AG04449 (cell line): ENCODE measurements at regions of chr9 and their contacts with region 1.

Region 1: DNA sequence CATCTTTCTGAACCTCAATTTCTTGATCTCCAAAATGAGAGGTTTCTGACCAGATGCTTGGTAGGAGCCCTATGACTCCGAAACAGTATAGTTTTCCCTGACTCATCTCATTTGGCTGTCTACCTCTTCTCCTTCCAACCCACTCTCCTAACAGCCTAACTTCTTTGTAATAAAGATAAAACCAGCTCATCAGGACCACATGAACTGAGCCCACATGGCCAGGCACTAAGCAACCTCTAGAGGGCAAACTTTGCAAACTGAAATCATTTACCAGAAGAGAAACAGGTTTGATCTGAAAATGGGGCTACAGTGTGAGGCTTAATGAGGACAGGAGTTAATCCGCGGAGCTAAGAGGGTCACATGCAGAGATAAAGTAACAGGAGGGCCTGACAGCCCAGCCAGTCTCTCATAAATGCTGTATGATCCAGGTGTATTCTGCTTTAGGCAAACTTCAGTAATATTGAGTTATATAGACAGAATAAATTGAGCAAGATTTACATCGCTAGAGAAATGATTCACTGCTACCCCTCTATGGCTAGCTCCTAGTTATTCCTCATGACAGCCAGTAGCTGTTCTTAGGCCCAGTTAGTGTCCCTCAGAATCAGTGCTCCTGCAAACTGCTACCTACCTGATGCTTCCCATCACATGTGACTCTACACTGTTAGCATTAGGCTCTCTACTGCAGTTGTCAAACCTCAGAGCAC is 64.6 kb downstream of the ABCA1 start:
- DNase-seq: no peak
- H3K4me3 ChIP-seq: no peak overlapping the region
- CTCF ChIP-seq: peak; percentile 75

Region 2: GRCh38 chr9:104885818-104886709 is 22.7 kb after region 1 on chr9:
- CTCF ChIA-PET with region 1: interaction called, 11 read pairs
- POLR2A ChIA-PET with region 1: no interaction called
- DNase-seq: no peak
- H3K4me3 ChIP-seq: no peak overlapping the region
- CTCF ChIP-seq: no peak

Region 3: DNA sequence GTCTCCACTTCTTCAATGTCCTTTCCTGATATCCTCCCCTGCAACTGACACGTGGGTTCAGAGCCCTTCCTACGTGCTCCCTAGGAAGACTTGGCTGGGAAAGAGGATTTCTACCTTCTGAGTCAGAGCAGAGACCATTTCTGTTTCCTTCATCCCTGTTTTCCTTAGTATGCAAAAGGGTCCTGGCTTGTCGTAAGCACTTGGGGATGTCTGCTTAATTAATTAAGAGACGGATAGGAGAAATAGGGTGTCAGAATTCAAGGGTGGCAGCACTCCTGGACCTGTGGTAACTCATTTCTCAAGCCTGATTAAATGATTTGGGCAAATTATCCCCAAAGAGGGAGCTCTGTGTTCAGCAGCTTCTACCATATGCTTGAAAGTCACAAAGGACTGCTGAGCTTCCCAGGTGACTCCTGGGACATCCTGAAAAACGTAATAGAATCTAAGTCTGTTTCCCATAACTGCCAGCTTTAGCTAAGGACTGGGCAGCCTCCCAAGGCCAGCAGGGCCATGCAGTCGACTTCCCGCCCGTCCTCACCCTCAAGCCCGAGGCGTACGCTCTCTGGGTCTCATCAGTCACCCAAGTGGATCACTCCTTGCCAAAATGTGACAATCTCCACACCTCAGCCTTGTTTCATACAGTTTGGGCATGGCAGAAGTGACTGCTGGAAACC is 44.1 kb after region 1 on chr9:
- CTCF ChIA-PET with region 1: interaction called, 16 read pairs
- POLR2A ChIA-PET with region 1: interaction called, 3 read pairs
- DNase-seq: no peak
- H3K4me3 ChIP-seq: no peak overlapping the region
- CTCF ChIP-seq: no peak

Region 4: DNA sequence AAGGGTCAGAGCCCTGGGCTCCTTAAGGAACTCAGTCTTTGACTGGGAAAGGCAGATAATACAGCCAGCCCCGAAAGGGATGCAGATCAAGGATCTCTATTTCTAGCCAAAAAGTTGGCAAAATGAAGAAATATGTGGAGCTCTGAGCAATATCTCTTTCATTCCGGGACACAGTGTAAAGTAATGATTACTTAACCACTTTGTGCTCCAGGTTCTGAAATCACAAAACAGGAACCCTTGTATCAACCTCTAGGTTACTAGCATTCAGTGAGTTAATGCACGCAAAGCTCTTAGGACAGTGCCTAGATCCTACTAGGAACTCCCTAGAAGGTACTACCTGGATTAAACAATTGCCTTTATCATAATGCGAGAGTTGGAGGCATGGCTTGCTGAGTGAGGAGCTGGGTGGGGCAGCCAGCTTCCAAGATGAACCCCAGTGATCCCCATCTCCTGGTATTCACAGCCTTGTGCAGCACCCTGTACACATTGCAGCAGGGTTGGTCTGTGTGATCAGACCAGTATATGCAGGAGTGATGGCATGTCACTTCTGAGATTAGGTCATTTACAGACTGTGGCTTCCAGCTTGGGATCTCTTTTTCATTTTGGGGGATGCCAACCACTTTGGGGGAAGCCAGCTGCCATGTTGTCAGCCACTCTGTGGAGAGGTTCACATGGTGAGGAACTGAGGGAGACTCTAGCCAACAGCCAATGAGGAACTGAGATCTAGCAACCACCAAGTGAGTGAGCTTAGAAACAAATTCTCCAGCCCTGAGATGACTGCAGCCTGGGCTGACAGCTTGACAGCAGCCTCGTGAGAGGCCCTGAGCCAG is 278.0 kb after region 1 on chr9:
- CTCF ChIA-PET with region 1: interaction called, 11 read pairs
- POLR2A ChIA-PET with region 1: no interaction called
- DNase-seq: no peak
- H3K4me3 ChIP-seq: no peak overlapping the region
- CTCF ChIP-seq: no peak

Region 5: GRCh38 chr9:105157130-105157583 is 293.8 kb after region 1 on chr9:
- CTCF ChIA-PET with region 1: interaction called, 32 read pairs
- POLR2A ChIA-PET with region 1: no interaction called
- DNase-seq: peak; percentile 41
- H3K4me3 ChIP-seq: no peak overlapping the region
- CTCF ChIP-seq: peak; percentile 37